Heart right ventricle (tissue), 16 donors: ENCODE measurements at regions of chr7 and their contacts with region 1.

Region 1: DNA sequence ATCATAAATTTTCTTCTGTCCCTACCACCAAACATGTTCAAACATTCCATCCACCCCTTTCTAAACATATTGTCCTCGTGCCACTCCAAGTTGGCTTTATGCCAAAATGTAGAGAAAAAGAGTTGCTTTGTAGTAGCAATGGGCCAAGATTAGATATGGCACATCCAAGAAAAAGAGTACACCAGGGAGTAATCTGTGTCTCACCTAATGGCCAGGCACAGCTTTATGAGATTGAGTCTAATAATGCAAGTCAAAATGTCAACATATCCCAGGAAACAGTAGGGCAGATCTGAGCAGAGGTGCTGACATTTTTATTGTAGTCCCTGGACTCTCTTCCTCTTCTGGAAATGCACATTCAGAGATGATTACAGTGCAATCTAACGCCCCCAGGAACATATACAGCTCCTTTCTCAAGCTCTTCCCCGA is 5.7 kb upstream of the OR6V1 start:
- DNase-seq: no peak
- ATAC-seq: no peak
- H3K4me3 ChIP-seq: no peak overlapping the region
- H3K27ac ChIP-seq: no peak overlapping the region
- H3K4me1 ChIP-seq: peaks cover 0 to 51% (median 14%) of the 10 kb centered on the region in 9 donors
- H3K27me3 ChIP-seq: peaks cover 0 to 6% (median 0%) of the 10 kb centered on the region in 7 donors
- CTCF ChIP-seq: no peak

Region 2: GRCh38 chr7:142168745-142169144 is 877.7 kb before region 1 on chr7:
- intact Hi-C with region 1: no loop called
- DNase-seq: no peak
- ATAC-seq: no peak
- H3K4me3 ChIP-seq: no peak overlapping the region
- H3K27ac ChIP-seq: no peak overlapping the region
- H3K4me1 ChIP-seq: no peaks in the 10 kb centered on the region
- H3K27me3 ChIP-seq: no peaks in the 10 kb centered on the region
- CTCF ChIP-seq: no peak

Region 3: GRCh38 chr7:143015926-143016490 is 30.4 kb before region 1 on chr7:
- intact Hi-C with region 1: loop called in 1 of 10 experiments (anchors 2 kb)
- DNase-seq: no peak
- ATAC-seq: no peak
- H3K4me3 ChIP-seq: no peak overlapping the region
- H3K27ac ChIP-seq: no peak overlapping the region
- H3K4me1 ChIP-seq: peaks cover 0 to 10% (median 4%) of the 10 kb centered on the region in 9 donors
- H3K27me3 ChIP-seq: peaks cover 0 to 6% (median 0%) of the 10 kb centered on the region in 7 donors
- CTCF ChIP-seq: no peak